ENCODE measurements at regions of chr22 and their contacts with region 1.

Region 1: DNA sequence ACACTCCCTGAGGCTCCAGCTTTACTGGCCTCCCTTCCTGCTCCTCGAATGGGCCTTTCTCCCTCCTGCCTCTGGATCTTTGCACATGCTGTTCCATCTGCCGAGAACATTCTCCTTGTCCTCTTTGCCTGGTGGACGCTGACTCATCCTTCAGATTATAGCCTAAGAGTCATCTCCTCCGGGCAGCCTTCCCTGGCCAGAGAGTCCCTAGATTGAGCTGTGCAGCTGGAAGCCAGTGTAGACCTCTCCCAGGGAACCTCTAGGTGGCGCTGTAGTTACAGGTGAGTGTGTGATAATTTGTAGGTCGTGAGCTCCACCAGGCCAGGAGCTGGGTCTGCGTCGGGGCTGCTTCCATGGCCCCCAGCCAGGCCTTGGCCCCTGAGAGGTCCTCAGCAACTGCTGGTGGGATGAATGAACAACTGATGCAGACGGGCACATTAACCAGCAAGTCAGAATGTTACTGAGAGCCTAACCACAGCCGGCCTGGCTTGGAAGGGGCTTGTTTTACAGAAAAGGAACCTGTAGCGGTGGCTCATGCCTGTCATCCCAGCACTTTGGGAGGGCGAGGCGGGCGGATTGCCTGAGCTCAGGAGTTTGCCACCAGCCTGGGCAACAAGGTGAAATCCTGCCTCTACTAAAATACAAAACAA is 8.7 kb downstream of the PNPLA5 start:
- DNase-seq: peak; percentile 58
- ATAC-seq: no peak
- H3K4me3 ChIP-seq: no peak overlapping the region
- H3K4me3 Mint-ChIP-seq: no peak overlapping the region
- H3K27ac ChIP-seq: no peak overlapping the region
- H3K27ac Mint-ChIP-seq: no peak overlapping the region
- H3K4me1 ChIP-seq: peaks cover 0 to 5% of the 10 kb centered on the region in 2 donors
- H3K4me1 Mint-ChIP-seq: peaks cover 4% of the 10 kb centered on the region
- H3K27me3 ChIP-seq: peaks cover 0 to 4% (median 0%) of the 10 kb centered on the region in 4 experiments
- H3K27me3 Mint-ChIP-seq: peaks cover 29% of the 10 kb centered on the region
- CTCF ChIP-seq: peak; percentile 59

Region 2: DNA sequence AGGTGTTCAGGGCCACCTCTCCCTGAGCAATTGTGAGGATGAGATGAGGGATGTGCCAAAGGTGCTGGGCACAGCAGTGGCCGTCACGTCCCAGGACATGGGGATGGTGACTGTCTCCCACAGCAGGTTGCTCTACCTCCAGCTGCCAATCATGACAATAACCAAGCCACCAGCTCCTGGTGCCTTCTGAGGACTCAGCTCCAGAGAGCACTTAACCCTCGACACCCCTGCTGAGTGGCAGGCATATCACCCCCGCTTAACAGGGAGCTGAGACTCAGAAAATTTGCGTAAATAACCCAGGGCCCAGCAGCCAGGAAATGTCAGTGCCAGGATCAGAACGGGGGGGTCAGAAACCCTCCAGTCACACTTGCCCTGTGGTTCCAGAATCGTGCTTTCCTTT is 17.1 kb after region 1 on chr22:
- CTCF ChIA-PET with region 1: no interaction called
- POLR2A ChIA-PET with region 1: no interaction called
- intact Hi-C with region 1: no loop called
- DNase-seq: no peak
- ATAC-seq: no peak
- H3K4me3 ChIP-seq: no peak overlapping the region
- H3K4me3 Mint-ChIP-seq: no peak overlapping the region
- H3K27ac ChIP-seq: no peak overlapping the region
- H3K27ac Mint-ChIP-seq: no peak overlapping the region
- H3K4me1 ChIP-seq: no peaks in the 10 kb centered on the region
- H3K4me1 Mint-ChIP-seq: no peaks in the 10 kb centered on the region
- H3K27me3 ChIP-seq: no peaks in the 10 kb centered on the region
- H3K27me3 Mint-ChIP-seq: peaks cover 26% of the 10 kb centered on the region
- CTCF ChIP-seq: no peak

Region 3: GRCh38 chr22:43945632-43946383 is 62.7 kb after region 1 on chr22:
- CTCF ChIA-PET with region 1: interaction called, 6 read pairs
- POLR2A ChIA-PET with region 1: no interaction called
- intact Hi-C with region 1: loop called (anchors 1 kb)
- DNase-seq: peak; percentile 70
- ATAC-seq: peak; percentile 88
- H3K4me3 ChIP-seq: no peak overlapping the region
- H3K4me3 Mint-ChIP-seq: no peak overlapping the region
- H3K27ac ChIP-seq: no peak overlapping the region
- H3K27ac Mint-ChIP-seq: no peak overlapping the region
- H3K4me1 ChIP-seq: peaks cover 0 to 4% of the 10 kb centered on the region in 2 donors
- H3K4me1 Mint-ChIP-seq: no peaks in the 10 kb centered on the region
- H3K27me3 ChIP-seq: peaks cover 0 to 3% (median 0%) of the 10 kb centered on the region in 4 experiments
- H3K27me3 Mint-ChIP-seq: peaks cover 10% of the 10 kb centered on the region
- CTCF ChIP-seq: peak; percentile 75

Region 4: GRCh38 chr22:44625981-44626687 is 743.0 kb after region 1 on chr22:
- CTCF ChIA-PET with region 1: no interaction called
- POLR2A ChIA-PET with region 1: no interaction called
- intact Hi-C with region 1: loop called (anchors 2 kb)
- DNase-seq: peak; percentile 80
- ATAC-seq: peak; percentile 87
- H3K4me3 ChIP-seq: no peak overlapping the region
- H3K4me3 Mint-ChIP-seq: no peak overlapping the region
- H3K27ac ChIP-seq: no peak overlapping the region
- H3K27ac Mint-ChIP-seq: no peak overlapping the region
- H3K4me1 ChIP-seq: peaks cover 0 to 3% of the 10 kb centered on the region in 2 donors
- H3K4me1 Mint-ChIP-seq: no peaks in the 10 kb centered on the region
- H3K27me3 ChIP-seq: peaks cover 0 to 5% (median 0%) of the 10 kb centered on the region in 4 experiments
- H3K27me3 Mint-ChIP-seq: peaks cover 7% of the 10 kb centered on the region
- CTCF ChIP-seq: peak; percentile 99

Measured in B cell (primary cell).